ENCODE measurements at regions of chr3 and their contacts with region 1.

Region 1: GRCh38 chr3:8441969-8442559 is 59.6 kb upstream of the LMCD1 start:
- DNase-seq: no peak
- ATAC-seq: no peak
- H3K4me3 ChIP-seq: no peak overlapping the region
- H3K27ac ChIP-seq: peak overlapping the region; percentile 93; the same call in 1 of the 2 replicates
- H3K4me1 ChIP-seq: peaks cover 36% of the 10 kb centered on the region
- H3K27me3 ChIP-seq: no peaks in the 10 kb centered on the region
- CTCF ChIP-seq: peak; percentile 76

Region 2: DNA sequence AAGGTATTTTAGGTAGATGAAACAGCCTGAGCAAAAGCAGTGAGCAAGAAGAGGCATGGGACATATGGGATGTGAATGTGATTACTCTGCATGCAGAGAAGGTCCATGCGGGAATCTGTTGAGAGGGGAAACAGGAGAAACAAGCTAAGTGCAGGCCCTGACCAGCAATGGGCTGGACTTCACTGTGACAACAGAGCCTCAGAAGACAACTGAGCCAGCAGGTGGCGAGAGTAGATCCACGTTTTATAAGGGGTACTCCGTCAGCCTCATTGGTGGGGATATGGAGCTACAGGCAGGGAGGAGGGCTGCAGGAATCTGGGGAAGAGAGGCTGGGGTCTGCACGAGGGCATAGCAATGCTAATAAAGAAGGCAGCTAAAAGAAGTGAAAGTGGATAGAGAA is 346.3 kb before region 1 on chr3:
- CTCF ChIA-PET with region 1: no interaction called
- POLR2A ChIA-PET with region 1: no interaction called
- in situ Hi-C with region 1: no loop called
- intact Hi-C with region 1: no loop called
- DNase-seq: no peak
- ATAC-seq: no peak
- H3K4me3 ChIP-seq: no peak overlapping the region
- H3K27ac ChIP-seq: no peak overlapping the region
- H3K4me1 ChIP-seq: no peaks in the 10 kb centered on the region
- H3K27me3 ChIP-seq: no peaks in the 10 kb centered on the region
- CTCF ChIP-seq: no peak; the same call in 1 of the 2 replicates

Region 3: DNA sequence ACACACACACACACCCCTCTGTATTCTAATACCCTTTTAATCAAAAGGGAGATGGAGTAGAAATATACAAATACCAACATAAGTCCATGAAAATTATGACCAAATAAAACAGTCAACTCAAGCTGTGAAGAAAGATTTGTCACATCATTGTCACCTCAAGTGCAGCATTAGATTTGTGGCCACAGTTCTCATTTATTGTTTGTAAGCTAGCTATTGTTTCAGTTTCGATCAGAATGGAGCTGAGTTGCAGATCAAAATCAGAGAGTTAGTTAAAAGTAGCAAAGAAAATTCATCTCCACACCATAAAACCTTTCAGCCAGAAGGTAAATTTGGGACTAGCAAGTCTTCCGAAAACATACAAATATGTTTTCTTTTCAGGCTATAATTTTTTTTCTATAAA is 208.1 kb before region 1 on chr3:
- CTCF ChIA-PET with region 1: no interaction called
- POLR2A ChIA-PET with region 1: no interaction called
- in situ Hi-C with region 1: no loop called
- intact Hi-C with region 1: no loop called
- DNase-seq: no peak
- ATAC-seq: no peak
- H3K4me3 ChIP-seq: no peak overlapping the region
- H3K27ac ChIP-seq: no peak overlapping the region
- H3K4me1 ChIP-seq: no peaks in the 10 kb centered on the region
- H3K27me3 ChIP-seq: no peaks in the 10 kb centered on the region
- CTCF ChIP-seq: no peak

Region 4: DNA sequence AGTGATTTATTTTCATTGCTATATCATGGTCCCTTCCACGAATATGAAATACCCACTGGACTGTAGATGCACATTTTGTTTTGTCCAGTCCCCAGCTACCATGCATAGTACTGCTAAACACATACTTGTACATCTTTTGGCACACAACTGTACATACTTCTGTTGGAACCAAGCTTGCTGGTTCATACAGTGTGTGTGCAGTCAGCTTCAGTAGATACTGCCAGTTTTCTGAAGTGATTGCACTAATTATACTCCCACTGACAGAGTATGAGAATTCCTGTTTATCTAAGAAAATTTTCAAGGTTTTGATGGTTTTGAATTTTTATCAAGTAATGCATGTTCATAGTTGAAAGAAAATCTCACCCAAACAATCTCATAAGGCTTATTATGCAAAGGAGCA is 41.2 kb before region 1 on chr3:
- CTCF ChIA-PET with region 1: no interaction called
- POLR2A ChIA-PET with region 1: no interaction called
- in situ Hi-C with region 1: no loop called
- intact Hi-C with region 1: no loop called
- DNase-seq: no peak
- ATAC-seq: no peak
- H3K4me3 ChIP-seq: no peak overlapping the region
- H3K27ac ChIP-seq: no peak overlapping the region
- H3K4me1 ChIP-seq: no peaks in the 10 kb centered on the region
- H3K27me3 ChIP-seq: no peaks in the 10 kb centered on the region
- CTCF ChIP-seq: no peak

Region 5: GRCh38 chr3:8501371-8502131 is 59.5 kb after region 1 on chr3 and contains the start of gene LMCD1:
- CTCF ChIA-PET with region 1: no interaction called
- POLR2A ChIA-PET with region 1: interaction called, 7 read pairs
- in situ Hi-C with region 1: no loop called
- intact Hi-C with region 1: loop called (anchors 2 kb)
- DNase-seq: no peak
- ATAC-seq: peak; percentile 96
- H3K4me3 ChIP-seq: peak within 1 kb of the TSS; percentile 61 to 74
- H3K27ac ChIP-seq: peak within 1 kb of the TSS; percentile 83
- H3K4me1 ChIP-seq: peaks cover 54% of the 10 kb centered on the region
- H3K27me3 ChIP-seq: no peaks in the 10 kb centered on the region
- CTCF ChIP-seq: no peak
- total RNA-seq, gene LMCD1: 24.8 TPM

Region 6: GRCh38 chr3:8607234-8608040 is 165.4 kb after region 1 on chr3:
- CTCF ChIA-PET with region 1: interaction called, 3 read pairs
- POLR2A ChIA-PET with region 1: no interaction called
- in situ Hi-C with region 1: no loop called
- intact Hi-C with region 1: loop called (anchors 5 kb)
- DNase-seq: no peak
- ATAC-seq: peak; percentile 84; the same call in 1 of the 2 replicates
- H3K4me3 ChIP-seq: no peak overlapping the region
- H3K27ac ChIP-seq: no peak overlapping the region
- H3K4me1 ChIP-seq: no peaks in the 10 kb centered on the region
- H3K27me3 ChIP-seq: no peaks in the 10 kb centered on the region
- CTCF ChIP-seq: peak; percentile 56

Region 7: GRCh38 chr3:8622873-8623691 is 181.0 kb after region 1 on chr3:
- CTCF ChIA-PET with region 1: interaction called, 4 read pairs
- POLR2A ChIA-PET with region 1: no interaction called
- in situ Hi-C with region 1: no loop called
- intact Hi-C with region 1: loop called (anchors 1 kb)
- DNase-seq: no peak
- ATAC-seq: peak; percentile 87
- H3K4me3 ChIP-seq: no peak overlapping the region
- H3K27ac ChIP-seq: 0 out of 2 replicates have a peak overlapping the region, but pooled peaks have one; percentile 34
- H3K4me1 ChIP-seq: peaks cover 6% of the 10 kb centered on the region
- H3K27me3 ChIP-seq: no peaks in the 10 kb centered on the region
- CTCF ChIP-seq: peak; percentile 89